ENCODE measurements at regions of chr1 and their contacts with region 1.

Region 1: GRCh38 chr1:37434292-37434907 is 40.0 kb upstream of the ZC3H12A start:
- DNase-seq: peak; percentile 62
- H3K4me3 Mint-ChIP-seq: no peak overlapping the region
- H3K27ac Mint-ChIP-seq: no peak overlapping the region
- H3K4me1 Mint-ChIP-seq: no peaks in the 10 kb centered on the region
- H3K27me3 Mint-ChIP-seq: peaks cover 48% of the 10 kb centered on the region
- CTCF ChIP-seq: peak; percentile 94

Region 2: DNA sequence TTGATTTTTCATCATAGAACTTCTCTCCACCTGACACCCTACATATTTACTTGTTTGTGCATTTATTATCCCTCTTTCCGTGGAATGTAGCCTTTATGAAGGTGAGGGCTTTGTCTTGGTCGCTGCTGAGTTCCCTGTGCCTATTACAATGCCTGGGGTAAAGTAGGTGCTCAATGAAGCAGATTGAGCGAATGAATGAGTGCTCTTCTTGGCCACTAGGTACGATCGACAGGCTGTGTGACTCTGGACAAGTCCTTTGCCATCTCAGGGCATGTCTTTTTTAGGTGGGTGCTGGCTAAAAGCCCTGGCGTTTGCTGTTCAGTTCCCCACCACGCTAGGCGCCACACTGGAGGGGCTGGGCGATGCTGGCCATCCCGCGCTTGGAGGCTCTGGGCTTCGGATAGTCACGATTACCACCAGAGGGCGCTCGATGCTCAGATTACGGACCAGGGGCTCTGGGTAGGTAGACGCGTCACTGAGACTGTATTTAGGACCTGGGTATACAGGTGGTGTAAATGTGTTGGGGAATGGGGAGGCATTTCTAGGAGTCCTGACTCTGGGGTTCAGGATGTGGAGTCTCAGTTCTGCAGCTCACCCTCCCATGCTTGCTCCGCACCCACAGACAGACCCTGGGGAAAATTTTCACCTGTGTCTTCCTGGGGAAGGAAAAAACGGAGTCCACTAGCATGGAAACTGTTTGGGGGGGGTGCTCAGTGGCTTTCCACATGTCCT is 880.6 kb before region 1 on chr1:
- CTCF ChIA-PET with region 1: interaction called, 8 read pairs
- POLR2A ChIA-PET with region 1: no interaction called
- intact Hi-C with region 1: loop called (anchors 5 kb)
- DNase-seq: peak; percentile 83
- H3K4me3 Mint-ChIP-seq: no peak overlapping the region
- H3K27ac Mint-ChIP-seq: no peak overlapping the region
- H3K4me1 Mint-ChIP-seq: no peaks in the 10 kb centered on the region
- H3K27me3 Mint-ChIP-seq: peaks cover 73% of the 10 kb centered on the region
- CTCF ChIP-seq: peak; percentile 81

Region 3: GRCh38 chr1:36703526-36704208 is 730.7 kb before region 1 on chr1:
- CTCF ChIA-PET with region 1: interaction called, 6 read pairs
- POLR2A ChIA-PET with region 1: no interaction called
- intact Hi-C with region 1: loop called (anchors 1 kb)
- DNase-seq: peak; percentile 69
- H3K4me3 Mint-ChIP-seq: no peak overlapping the region
- H3K27ac Mint-ChIP-seq: no peak overlapping the region
- H3K4me1 Mint-ChIP-seq: no peaks in the 10 kb centered on the region
- H3K27me3 Mint-ChIP-seq: peaks cover 60% of the 10 kb centered on the region
- CTCF ChIP-seq: peak; percentile 94

Region 4: DNA sequence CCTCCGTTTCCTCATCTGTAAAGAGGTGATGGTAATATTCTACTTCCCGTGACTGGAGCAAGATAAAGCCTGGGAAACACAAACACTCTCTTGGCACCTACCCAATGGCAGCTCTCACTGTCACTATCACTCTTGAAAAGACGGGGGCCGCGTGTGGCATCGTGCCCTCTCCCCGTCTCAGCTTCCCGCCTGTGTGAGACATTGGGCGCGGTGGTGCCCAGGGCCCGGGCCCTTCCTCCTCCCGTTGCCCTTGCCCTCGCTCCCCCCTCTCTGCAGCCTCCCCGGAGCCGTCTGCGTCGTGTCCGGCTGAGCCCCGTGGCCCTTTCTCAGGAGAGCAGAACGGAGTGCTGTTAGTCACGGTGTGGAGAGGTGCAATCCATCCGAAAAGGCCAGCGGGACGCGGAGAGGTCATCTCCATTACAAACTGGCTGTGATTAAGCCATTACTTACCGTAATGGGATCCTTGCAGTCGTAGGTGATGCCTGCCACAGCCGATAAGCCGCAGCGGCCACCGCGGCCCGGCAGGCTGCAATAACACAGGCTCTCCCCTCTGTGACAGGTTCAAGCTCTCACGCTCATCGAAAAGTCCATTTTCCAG is 116.4 kb before region 1 on chr1:
- CTCF ChIA-PET with region 1: no interaction called
- POLR2A ChIA-PET with region 1: no interaction called
- intact Hi-C with region 1: no loop called
- DNase-seq: no peak
- H3K4me3 Mint-ChIP-seq: no peak overlapping the region
- H3K27ac Mint-ChIP-seq: no peak overlapping the region
- H3K4me1 Mint-ChIP-seq: no peaks in the 10 kb centered on the region
- H3K27me3 Mint-ChIP-seq: peaks cover 44% of the 10 kb centered on the region
- CTCF ChIP-seq: no peak

Region 5: DNA sequence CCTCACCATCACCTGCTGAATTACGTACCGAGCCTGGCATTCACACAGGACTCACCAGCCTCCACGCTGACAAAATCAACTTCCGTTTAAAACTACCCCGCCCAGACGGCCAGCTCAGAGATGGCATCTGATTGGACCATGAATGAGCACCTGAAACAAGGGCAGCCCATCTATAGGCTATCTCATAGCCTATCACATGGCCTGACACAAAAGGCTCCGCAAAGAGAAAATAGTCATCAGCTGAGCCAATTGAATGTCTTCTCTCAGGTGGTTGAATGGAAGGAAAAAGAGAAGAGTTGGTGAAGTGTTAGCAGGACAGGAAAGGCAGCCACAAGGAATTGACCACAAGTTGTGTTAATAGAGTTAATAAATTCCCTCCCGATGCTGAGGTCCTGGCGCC is 10.6 kb before region 1 on chr1:
- CTCF ChIA-PET with region 1: interaction called, 22 read pairs
- POLR2A ChIA-PET with region 1: no interaction called
- intact Hi-C with region 1: no loop called
- DNase-seq: no peak
- H3K4me3 Mint-ChIP-seq: no peak overlapping the region
- H3K27ac Mint-ChIP-seq: no peak overlapping the region
- H3K4me1 Mint-ChIP-seq: no peaks in the 10 kb centered on the region
- H3K27me3 Mint-ChIP-seq: peaks cover 15% of the 10 kb centered on the region
- CTCF ChIP-seq: no peak

Region 6: GRCh38 chr1:37553927-37554808 is 119.8 kb after region 1 on chr1 and contains the start of gene SNIP1:
- CTCF ChIA-PET with region 1: no interaction called
- POLR2A ChIA-PET with region 1: no interaction called
- intact Hi-C with region 1: no loop called
- DNase-seq: peak; percentile 94
- H3K4me3 Mint-ChIP-seq: peak within 1 kb of the TSS; percentile 96
- H3K27ac Mint-ChIP-seq: peak within 1 kb of the TSS; percentile 99
- H3K4me1 Mint-ChIP-seq: peaks cover 16% of the 10 kb centered on the region
- H3K27me3 Mint-ChIP-seq: no peaks in the 10 kb centered on the region
- CTCF ChIP-seq: no peak
- total RNA-seq, gene SNIP1: 26.4 and 32.0 TPM in 2 replicates

Region 7: GRCh38 chr1:37752583-37753471 is 318.4 kb after region 1 on chr1:
- CTCF ChIA-PET with region 1: no interaction called
- POLR2A ChIA-PET with region 1: no interaction called
- intact Hi-C with region 1: no loop called
- DNase-seq: no peak
- H3K4me3 Mint-ChIP-seq: peak overlapping the region; percentile 54
- H3K27ac Mint-ChIP-seq: no peak overlapping the region
- H3K4me1 Mint-ChIP-seq: no peaks in the 10 kb centered on the region
- H3K27me3 Mint-ChIP-seq: peaks cover 13% of the 10 kb centered on the region
- CTCF ChIP-seq: no peak

Region 8: GRCh38 chr1:37914719-37915475 is 480.5 kb after region 1 on chr1:
- CTCF ChIA-PET with region 1: no interaction called
- POLR2A ChIA-PET with region 1: no interaction called
- intact Hi-C with region 1: no loop called
- DNase-seq: no peak
- H3K4me3 Mint-ChIP-seq: no peak overlapping the region
- H3K27ac Mint-ChIP-seq: no peak overlapping the region
- H3K4me1 Mint-ChIP-seq: no peaks in the 10 kb centered on the region
- H3K27me3 Mint-ChIP-seq: no peaks in the 10 kb centered on the region
- CTCF ChIP-seq: no peak

Measured in MCF 10A (cell line).